Astrocyte of the cerebellum (primary cell): ENCODE measurements at regions of chr13 and their contacts with region 1.

Region 1: DNA sequence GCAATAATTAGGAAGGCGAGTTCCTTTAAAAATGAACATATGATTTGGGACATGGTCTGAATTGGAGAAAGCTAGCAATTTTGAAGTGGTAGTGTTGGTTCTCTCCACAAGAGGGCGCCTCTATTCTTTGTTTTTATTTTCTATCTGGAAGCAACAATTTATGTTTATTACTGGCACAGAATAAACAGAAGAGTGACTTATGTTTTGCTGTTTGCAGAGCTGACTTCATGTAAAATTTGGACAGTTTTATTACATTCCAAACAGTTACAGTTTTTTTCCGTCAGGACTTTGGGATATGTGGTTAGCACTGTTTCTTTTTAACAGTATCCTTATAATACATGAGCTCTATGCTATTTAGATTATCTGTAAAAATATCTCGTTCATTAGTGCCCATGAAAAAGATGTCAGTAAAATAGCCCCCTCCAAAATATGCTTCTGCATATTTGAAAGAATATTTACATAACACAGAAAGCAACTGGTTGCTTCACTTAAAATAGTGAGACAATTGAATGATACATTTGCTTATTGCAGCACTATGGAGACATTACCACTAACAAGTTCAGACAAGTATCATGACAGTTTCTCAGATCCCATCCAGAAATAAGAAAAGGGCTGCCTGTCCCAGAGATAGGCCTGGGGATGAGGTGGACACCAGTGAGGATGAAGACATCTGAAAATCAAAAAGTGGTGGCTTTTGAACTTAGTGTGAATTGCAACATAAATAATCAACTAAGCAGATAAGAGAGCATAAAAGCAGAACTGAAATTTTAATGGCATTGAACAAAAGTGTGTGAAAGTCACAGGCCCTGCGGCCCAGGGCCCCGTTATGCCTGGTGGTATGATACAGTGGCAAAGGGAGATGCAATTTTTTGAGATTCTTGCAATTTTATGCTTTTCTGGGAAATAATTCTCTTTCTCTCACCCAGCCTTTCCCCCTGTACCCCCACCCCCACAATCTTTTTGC is 32.3 kb upstream of the FGF9 start:
- DNase-seq: no peak
- H3K4me3 ChIP-seq: no peak overlapping the region
- CTCF ChIP-seq: peak; percentile 62

Region 2: GRCh38 chr13:22793598-22794134 is 1155.1 kb after region 1 on chr13:
- in situ Hi-C with region 1: loop called (anchors 25 kb)
- DNase-seq: no peak
- H3K4me3 ChIP-seq: no peak overlapping the region
- CTCF ChIP-seq: no peak